Caco-2 (cell line): ENCODE measurements at regions of chr2 and their contacts with region 1.

Region 1: GRCh38 chr2:217510771-217511291 is 492.0 kb downstream of the TNS1 start:
- DNase-seq: peak; percentile 70 to 76
- H3K4me3 ChIP-seq: no peak overlapping the region
- H3K4me3 Mint-ChIP-seq: no peak overlapping the region
- H3K27ac Mint-ChIP-seq: peak overlapping the region; percentile 30
- H3K4me1 ChIP-seq: peaks cover 5% of the 10 kb centered on the region
- H3K4me1 Mint-ChIP-seq: peaks cover 24% of the 10 kb centered on the region
- H3K27me3 ChIP-seq: no peaks in the 10 kb centered on the region
- H3K27me3 Mint-ChIP-seq: peaks cover 8% of the 10 kb centered on the region
- CTCF ChIP-seq: peak; percentile 80 to 88

Region 2: GRCh38 chr2:216683846-216684507 is 826.9 kb before region 1 on chr2:
- CTCF ChIA-PET with region 1: no interaction called
- POLR2A ChIA-PET with region 1: no interaction called
- intact Hi-C with region 1: loop called (anchors 1 kb)
- DNase-seq: peak in 1 of 2 experiments; percentile 38
- H3K4me3 ChIP-seq: no peak overlapping the region
- H3K4me3 Mint-ChIP-seq: no peak overlapping the region
- H3K27ac Mint-ChIP-seq: peak overlapping the region; percentile 49
- H3K4me1 ChIP-seq: no peaks in the 10 kb centered on the region
- H3K4me1 Mint-ChIP-seq: no peaks in the 10 kb centered on the region
- H3K27me3 ChIP-seq: no peaks in the 10 kb centered on the region
- H3K27me3 Mint-ChIP-seq: peaks cover 19% of the 10 kb centered on the region
- CTCF ChIP-seq: no peak

Region 3: GRCh38 chr2:216777650-216778273 is 733.1 kb before region 1 on chr2:
- CTCF ChIA-PET with region 1: interaction called, 3 read pairs
- POLR2A ChIA-PET with region 1: no interaction called
- intact Hi-C with region 1: loop called (anchors 1 kb)
- DNase-seq: peak; percentile 74 to 77
- H3K4me3 ChIP-seq: no peak overlapping the region
- H3K4me3 Mint-ChIP-seq: no peak overlapping the region
- H3K27ac Mint-ChIP-seq: no peak overlapping the region
- H3K4me1 ChIP-seq: 0 out of 2 replicates have a peak, but pooled peaks cover 2% of the 10 kb centered on the region
- H3K4me1 Mint-ChIP-seq: no peaks in the 10 kb centered on the region
- H3K27me3 ChIP-seq: no peaks in the 10 kb centered on the region
- H3K27me3 Mint-ChIP-seq: peaks cover 7% of the 10 kb centered on the region
- CTCF ChIP-seq: peak; percentile 90 to 93

Region 4: GRCh38 chr2:217166241-217166850 is 344.5 kb before region 1 on chr2:
- CTCF ChIA-PET with region 1: interaction called, 10 read pairs
- POLR2A ChIA-PET with region 1: no interaction called
- intact Hi-C with region 1: loop called (anchors 1 kb)
- DNase-seq: peak in 1 of 2 experiments; percentile 35
- H3K4me3 ChIP-seq: no peak overlapping the region
- H3K4me3 Mint-ChIP-seq: no peak overlapping the region
- H3K27ac Mint-ChIP-seq: no peak overlapping the region
- H3K4me1 ChIP-seq: no peaks in the 10 kb centered on the region
- H3K4me1 Mint-ChIP-seq: no peaks in the 10 kb centered on the region
- H3K27me3 ChIP-seq: peaks cover 1% of the 10 kb centered on the region; the same call in 1 of the 2 replicates
- H3K27me3 Mint-ChIP-seq: peaks cover 8% of the 10 kb centered on the region
- CTCF ChIP-seq: peak; percentile 39 to 44

Region 5: GRCh38 chr2:217650716-217651360 is 140.0 kb after region 1 on chr2:
- CTCF ChIA-PET with region 1: interaction called, 11 read pairs
- POLR2A ChIA-PET with region 1: no interaction called
- intact Hi-C with region 1: loop called (anchors 1 kb)
- DNase-seq: peak; percentile 77 to 85
- H3K4me3 ChIP-seq: no peak overlapping the region
- H3K4me3 Mint-ChIP-seq: no peak overlapping the region
- H3K27ac Mint-ChIP-seq: no peak overlapping the region
- H3K4me1 ChIP-seq: peaks cover 7% of the 10 kb centered on the region
- H3K4me1 Mint-ChIP-seq: peaks cover 10% of the 10 kb centered on the region
- H3K27me3 ChIP-seq: no peaks in the 10 kb centered on the region
- H3K27me3 Mint-ChIP-seq: no peaks in the 10 kb centered on the region
- CTCF ChIP-seq: peak; percentile 67 to 85